ENCODE measurements at regions of chr12 and their contacts with region 1.

Region 1: DNA sequence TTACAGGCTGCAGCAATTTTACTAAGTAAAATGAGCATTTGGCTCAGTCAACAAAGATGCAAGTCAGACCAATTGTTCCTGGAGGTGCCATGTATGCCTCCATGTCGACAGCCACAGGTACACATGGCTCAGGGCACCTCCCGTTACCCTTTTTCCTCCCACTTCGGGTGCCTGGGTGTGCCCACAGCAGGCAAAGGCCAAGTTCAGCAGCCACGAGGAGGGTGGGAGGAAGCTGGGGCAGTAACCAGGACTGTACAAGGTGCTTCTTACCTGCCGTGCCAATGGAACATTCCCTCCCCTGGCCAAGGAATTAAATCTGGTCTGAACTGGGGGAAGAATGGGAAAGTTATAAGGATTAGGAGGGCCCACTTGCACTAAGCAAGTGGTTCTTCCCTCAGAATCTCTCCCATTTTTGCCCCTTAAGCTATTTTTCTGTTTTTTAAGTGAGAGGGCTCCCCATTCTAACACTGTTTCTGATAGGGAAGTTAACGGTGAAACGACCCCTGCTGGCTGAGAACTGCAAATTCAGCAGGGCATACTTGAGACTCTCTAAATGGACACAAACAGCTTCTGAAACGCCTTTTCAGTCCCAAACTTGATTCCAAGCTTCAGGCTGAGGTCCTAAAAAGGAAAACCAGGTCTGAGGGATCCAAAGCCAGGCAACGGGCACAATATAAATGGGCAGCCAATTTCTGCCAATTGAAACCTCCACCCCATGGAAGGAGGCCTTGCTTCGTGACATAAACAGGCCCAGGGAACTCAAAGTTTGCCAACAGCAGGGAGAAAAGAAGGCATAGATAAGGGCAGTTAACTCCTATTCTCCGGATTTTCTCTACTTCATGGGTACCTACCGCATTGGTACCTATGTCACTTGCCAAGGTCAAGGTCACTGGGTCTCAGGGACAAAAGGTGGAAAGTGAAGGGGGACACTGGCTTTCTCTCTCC is 24.8 kb downstream of the CLECL1 start:
- DNase-seq: peak; percentile 77
- ATAC-seq: peak; percentile 59
- H3K4me3 ChIP-seq: peak overlapping the region in 3 of 5 experiments; percentile 19 to 47 (median 31)
- H3K4me3 Mint-ChIP-seq: peak overlapping the region; percentile 35
- H3K27ac ChIP-seq: peak overlapping the region; percentile 72 to 92
- H3K27ac Mint-ChIP-seq: peak overlapping the region; percentile 89
- H3K4me1 ChIP-seq: peaks cover 76 to 78% of the 10 kb centered on the region in 2 donors
- H3K4me1 Mint-ChIP-seq: peaks cover 84% of the 10 kb centered on the region
- H3K27me3 ChIP-seq: no peaks in the 10 kb centered on the region
- H3K27me3 Mint-ChIP-seq: no peaks in the 10 kb centered on the region
- CTCF ChIP-seq: peak; percentile 76

Region 2: GRCh38 chr12:9404469-9405260 is 303.5 kb before region 1 on chr12:
- CTCF ChIA-PET with region 1: no interaction called
- POLR2A ChIA-PET with region 1: no interaction called
- intact Hi-C with region 1: no loop called
- DNase-seq: no peak
- ATAC-seq: no peak
- H3K4me3 ChIP-seq: no peak overlapping the region
- H3K4me3 Mint-ChIP-seq: no peak overlapping the region
- H3K27ac ChIP-seq: no peak overlapping the region
- H3K27ac Mint-ChIP-seq: no peak overlapping the region
- H3K4me1 ChIP-seq: peaks cover 0 to 5% of the 10 kb centered on the region in 2 donors
- H3K4me1 Mint-ChIP-seq: no peaks in the 10 kb centered on the region
- H3K27me3 ChIP-seq: no peaks in the 10 kb centered on the region
- H3K27me3 Mint-ChIP-seq: no peaks in the 10 kb centered on the region
- CTCF ChIP-seq: no peak

Region 3: DNA sequence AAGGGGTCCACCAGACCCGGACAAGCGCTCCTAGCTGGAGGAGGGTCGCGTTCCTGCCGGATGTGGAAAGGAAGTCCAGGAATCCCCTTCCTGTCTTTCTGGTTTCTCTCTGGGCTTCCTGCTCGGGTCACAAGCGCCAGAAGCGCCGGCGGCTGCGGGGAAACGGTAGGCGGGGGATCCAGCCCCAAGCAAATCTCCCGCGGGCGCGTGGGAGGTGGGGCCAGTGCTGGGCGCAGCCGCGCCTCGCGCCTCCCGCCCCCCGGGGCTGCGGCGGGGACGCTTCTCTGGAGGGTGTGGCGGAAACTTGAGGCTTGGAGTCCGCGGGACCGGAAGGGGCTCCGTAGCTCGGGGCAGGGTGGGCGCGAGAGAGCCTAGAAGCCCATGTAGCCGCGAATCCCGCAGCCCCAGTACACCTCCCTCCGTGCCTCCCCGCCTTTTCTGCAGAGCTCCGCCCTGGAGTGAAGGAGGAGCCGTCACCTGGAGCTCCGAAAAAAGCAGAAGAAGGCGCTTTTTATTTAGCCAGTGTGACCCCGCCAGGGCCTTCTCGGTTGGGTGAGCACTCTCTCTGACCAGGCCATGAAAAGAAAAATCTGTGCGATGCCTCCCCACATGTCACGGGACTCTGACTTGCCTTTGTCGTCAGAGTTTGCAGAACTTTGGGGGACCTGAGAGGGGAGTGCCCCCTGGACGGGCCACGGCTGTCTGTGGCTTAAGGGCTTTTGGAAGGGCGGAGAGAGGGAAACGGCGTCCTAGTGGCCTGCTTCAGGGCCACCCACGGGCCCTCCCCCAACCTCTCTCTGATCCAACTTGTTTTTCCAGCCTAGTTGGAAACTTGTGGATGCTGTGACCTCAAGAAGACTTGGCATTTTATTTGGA is 60.1 kb before region 1 on chr12:
- CTCF ChIA-PET with region 1: interaction called, 12 read pairs
- POLR2A ChIA-PET with region 1: interaction called, 10 read pairs
- intact Hi-C with region 1: no loop called
- DNase-seq: peak; percentile 97
- ATAC-seq: peak; percentile 71
- H3K4me3 ChIP-seq: peak overlapping the region; percentile 72 to 99 (median 83)
- H3K4me3 Mint-ChIP-seq: peak overlapping the region; percentile 98
- H3K27ac ChIP-seq: peak overlapping the region; percentile 92 to 98
- H3K27ac Mint-ChIP-seq: peak overlapping the region; percentile 86
- H3K4me1 ChIP-seq: peaks cover 34% of the 10 kb centered on the region in 2 donors
- H3K4me1 Mint-ChIP-seq: peaks cover 52% of the 10 kb centered on the region
- H3K27me3 ChIP-seq: no peaks in the 10 kb centered on the region
- H3K27me3 Mint-ChIP-seq: no peaks in the 10 kb centered on the region
- CTCF ChIP-seq: no peak

Region 4: DNA sequence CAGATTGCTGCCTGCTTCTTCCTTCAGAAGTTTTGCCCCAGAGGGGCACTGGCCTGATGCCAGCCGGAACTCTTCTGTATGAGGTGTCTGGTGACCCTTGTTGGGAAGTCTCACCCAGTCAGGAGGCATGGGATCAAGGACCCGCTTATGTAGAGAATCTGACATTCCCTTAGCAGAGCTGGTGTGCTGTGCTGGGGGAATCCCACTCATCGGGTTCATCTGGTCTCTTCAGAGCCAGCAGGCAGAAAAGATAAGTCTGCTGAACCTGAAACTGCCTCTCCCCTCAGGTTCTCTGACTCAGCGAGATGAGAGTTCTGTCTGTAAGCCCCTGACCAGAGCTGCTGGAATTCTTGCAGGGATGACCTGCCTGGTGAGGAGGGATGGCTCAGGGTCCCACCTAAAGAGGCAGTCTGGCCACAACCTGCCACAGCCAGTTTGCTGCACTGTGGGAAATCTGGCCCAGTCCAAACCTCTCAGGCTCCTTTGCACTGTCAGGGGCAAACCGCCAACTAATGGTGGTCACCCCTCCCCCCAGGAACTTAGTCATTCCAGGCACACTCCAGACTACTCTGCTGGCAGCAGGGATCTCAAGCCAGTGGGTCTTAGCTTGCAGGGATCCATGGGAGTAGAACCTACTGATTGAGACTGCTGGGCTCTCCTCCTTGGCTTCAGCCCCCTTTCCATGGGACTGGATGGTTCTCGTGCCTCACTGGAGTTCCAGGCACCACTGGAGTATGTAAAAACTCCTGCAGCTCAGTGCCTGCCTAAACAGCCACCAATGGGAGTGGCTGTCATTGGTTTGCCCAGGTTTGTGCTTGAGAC is 34.5 kb before region 1 on chr12:
- CTCF ChIA-PET with region 1: interaction called, 8 read pairs
- POLR2A ChIA-PET with region 1: interaction called, 4 read pairs
- intact Hi-C with region 1: loop called (anchors 5 kb)
- DNase-seq: peak; percentile 56
- ATAC-seq: peak; percentile 32
- H3K4me3 ChIP-seq: peak overlapping the region in 3 of 5 experiments; percentile 63 to 77 (median 69)
- H3K4me3 Mint-ChIP-seq: peak overlapping the region; percentile 91
- H3K27ac ChIP-seq: peak overlapping the region; percentile 28 to 87
- H3K27ac Mint-ChIP-seq: peak overlapping the region; percentile 86
- H3K4me1 ChIP-seq: peaks cover 60 to 70% of the 10 kb centered on the region in 2 donors
- H3K4me1 Mint-ChIP-seq: peaks cover 77% of the 10 kb centered on the region
- H3K27me3 ChIP-seq: no peaks in the 10 kb centered on the region
- H3K27me3 Mint-ChIP-seq: no peaks in the 10 kb centered on the region
- CTCF ChIP-seq: no peak

Region 5: GRCh38 chr12:9721394-9722092 is 13.4 kb after region 1 on chr12:
- CTCF ChIA-PET with region 1: interaction called, 28 read pairs
- POLR2A ChIA-PET with region 1: interaction called, 6 read pairs
- intact Hi-C with region 1: loop called (anchors 1 kb)
- DNase-seq: peak; percentile 85
- ATAC-seq: peak; percentile 89
- H3K4me3 ChIP-seq: peak overlapping the region in 1 of 5 experiments; percentile 43
- H3K4me3 Mint-ChIP-seq: peak overlapping the region; percentile 60
- H3K27ac ChIP-seq: peak overlapping the region; percentile 88 to 91
- H3K27ac Mint-ChIP-seq: peak overlapping the region; percentile 85
- H3K4me1 ChIP-seq: peaks cover 71 to 94% of the 10 kb centered on the region in 2 donors
- H3K4me1 Mint-ChIP-seq: peaks cover 86% of the 10 kb centered on the region
- H3K27me3 ChIP-seq: no peaks in the 10 kb centered on the region
- H3K27me3 Mint-ChIP-seq: no peaks in the 10 kb centered on the region
- CTCF ChIP-seq: no peak

Region 6: GRCh38 chr12:9741726-9742125 is 33.6 kb after region 1 on chr12:
- CTCF ChIA-PET with region 1: interaction called, 75 read pairs
- POLR2A ChIA-PET with region 1: interaction called, 5 read pairs
- intact Hi-C with region 1: loop called (anchors 2 kb)
- DNase-seq: peak; percentile 86
- ATAC-seq: peak; percentile 67
- H3K4me3 ChIP-seq: peak overlapping the region in 1 of 5 experiments; percentile 29
- H3K4me3 Mint-ChIP-seq: peak overlapping the region; percentile 81
- H3K27ac ChIP-seq: peak overlapping the region; percentile 36 to 66
- H3K27ac Mint-ChIP-seq: peak overlapping the region; percentile 91
- H3K4me1 ChIP-seq: peaks cover 55 to 64% of the 10 kb centered on the region in 2 donors
- H3K4me1 Mint-ChIP-seq: peaks cover 56% of the 10 kb centered on the region
- H3K27me3 ChIP-seq: no peaks in the 10 kb centered on the region
- H3K27me3 Mint-ChIP-seq: no peaks in the 10 kb centered on the region
- CTCF ChIP-seq: no peak